ENCODE measurements at regions of chr4 and their contacts with region 1.

Region 1: DNA sequence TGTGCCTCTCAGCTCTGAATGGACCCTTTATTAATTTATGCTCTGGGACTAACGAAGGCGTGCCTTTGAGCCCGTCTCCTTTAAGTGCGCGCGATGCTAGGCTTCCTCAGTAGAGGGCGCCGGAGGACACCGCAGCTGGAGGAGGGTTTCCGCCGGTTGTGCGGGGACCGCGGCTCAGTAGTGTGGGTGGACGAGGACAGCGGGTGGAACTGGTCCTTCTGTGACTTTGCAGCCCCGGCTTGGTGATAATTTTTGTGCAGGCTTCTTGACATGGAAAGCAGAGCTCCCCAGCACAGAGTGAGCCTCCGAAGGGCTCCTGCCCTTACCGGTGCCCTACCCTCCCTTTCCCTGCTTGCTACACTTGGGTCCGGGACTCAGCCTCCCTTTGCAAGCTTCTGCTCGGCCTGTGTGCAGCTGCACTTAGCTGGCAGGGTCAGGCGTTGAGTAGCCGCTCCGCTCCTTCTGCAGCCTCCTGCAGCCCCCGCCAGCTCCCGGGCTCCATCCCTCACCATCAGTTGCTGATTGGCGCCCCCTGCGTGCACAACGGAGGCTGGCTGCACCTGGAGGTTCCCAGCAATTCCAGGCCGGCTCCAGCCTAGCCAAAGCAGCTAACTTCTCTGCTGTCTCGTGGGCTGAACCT is 26.8 kb upstream of the BOD1L1 start:
- DNase-seq: peak; percentile 87
- ATAC-seq: peak; percentile 94
- H3K4me3 Mint-ChIP-seq: peak overlapping the region; percentile 75
- H3K27ac Mint-ChIP-seq: no peak overlapping the region
- H3K4me1 Mint-ChIP-seq: peaks cover 20% of the 10 kb centered on the region
- H3K27me3 Mint-ChIP-seq: no peaks in the 10 kb centered on the region
- CTCF ChIP-seq: peak; percentile 42

Region 2: DNA sequence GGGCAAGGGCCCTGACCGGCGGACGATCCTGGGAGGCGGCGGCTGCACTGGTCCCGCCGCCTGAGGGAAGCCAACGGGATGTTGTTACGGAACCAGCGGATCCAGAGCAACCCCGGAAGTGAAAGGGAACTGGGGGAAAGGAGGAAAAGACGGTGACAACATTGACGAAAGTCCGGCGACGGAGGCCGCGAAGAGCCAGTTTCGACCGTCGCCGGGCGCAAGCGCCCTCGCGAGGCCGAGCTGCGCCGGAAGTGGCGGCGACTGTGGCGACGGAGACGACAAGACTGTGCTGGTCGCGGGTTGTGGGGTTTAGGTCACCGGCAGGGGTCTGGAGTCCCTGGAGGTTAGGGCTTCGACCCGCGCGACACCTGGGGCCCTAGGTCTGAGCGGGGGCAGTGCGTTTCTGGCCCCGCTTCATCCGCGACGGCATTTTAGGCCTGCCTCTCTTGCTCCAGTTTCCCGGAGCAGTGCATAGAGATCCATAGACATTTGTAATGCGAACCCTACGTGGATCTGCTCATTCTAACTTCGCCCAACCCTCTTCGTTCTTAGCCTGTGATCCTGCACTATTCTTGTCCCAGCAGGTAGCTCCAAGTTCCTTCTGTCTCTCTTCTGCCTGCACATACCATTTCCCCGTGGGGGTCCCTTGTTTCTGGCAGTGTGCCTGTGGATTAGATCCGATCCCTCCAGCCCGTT is 26.5 kb before region 1 on chr4 and contains the start of gene BOD1L1:
- CTCF ChIA-PET with region 1: interaction called, 23 read pairs
- POLR2A ChIA-PET with region 1: no interaction called
- DNase-seq: peak; percentile 80
- ATAC-seq: peak; percentile 89
- H3K4me3 Mint-ChIP-seq: peak within 1 kb of the TSS; percentile 97
- H3K27ac Mint-ChIP-seq: peak within 1 kb of the TSS; percentile 97
- H3K4me1 Mint-ChIP-seq: peaks cover 8% of the 10 kb centered on the region
- H3K27me3 Mint-ChIP-seq: no peaks in the 10 kb centered on the region; the same call in 1 of the 2 replicates
- CTCF ChIP-seq: no peak
- total RNA-seq, gene BOD1L1: 31.9 to 43.5 TPM (median 32.4 TPM) in 3 replicates

Region 3: GRCh38 chr4:13640149-13640940 is 13.9 kb before region 1 on chr4:
- CTCF ChIA-PET with region 1: interaction called, 50 read pairs
- POLR2A ChIA-PET with region 1: no interaction called
- DNase-seq: peak; percentile 18
- ATAC-seq: peak; percentile 91
- H3K4me3 Mint-ChIP-seq: no peak overlapping the region
- H3K27ac Mint-ChIP-seq: peak overlapping the region; percentile 61; the same call in 1 of the 2 replicates
- H3K4me1 Mint-ChIP-seq: peaks cover 37% of the 10 kb centered on the region
- H3K27me3 Mint-ChIP-seq: no peaks in the 10 kb centered on the region; the same call in 1 of the 2 replicates
- CTCF ChIP-seq: no peak

Region 4: GRCh38 chr4:13670456-13671160 is 16.3 kb after region 1 on chr4:
- CTCF ChIA-PET with region 1: interaction called, 12 read pairs
- POLR2A ChIA-PET with region 1: no interaction called
- DNase-seq: no peak
- ATAC-seq: no peak
- H3K4me3 Mint-ChIP-seq: no peak overlapping the region
- H3K27ac Mint-ChIP-seq: no peak overlapping the region
- H3K4me1 Mint-ChIP-seq: no peaks in the 10 kb centered on the region
- H3K27me3 Mint-ChIP-seq: no peaks in the 10 kb centered on the region
- CTCF ChIP-seq: no peak

Measured in WTC11 (cell line).